OCI-LY7 (cell line): ENCODE measurements at regions of chr2 and their contacts with region 1.

Region 1: GRCh38 chr2:194148776-194149175 is 1508.2 kb upstream of the SLC39A10 start:
- DNase-seq: no peak
- H3K4me3 ChIP-seq: no peak overlapping the region
- H3K27ac ChIP-seq: no peak overlapping the region
- H3K4me1 ChIP-seq: no peaks in the 10 kb centered on the region
- CTCF ChIP-seq: no peak

Region 2: GRCh38 chr2:194135463-194135862 is 13.3 kb before region 1 on chr2:
- CTCF ChIA-PET with region 1: no interaction called
- POLR2A ChIA-PET with region 1: interaction called, 12 read pairs
- intact Hi-C with region 1: no loop called
- DNase-seq: no peak
- H3K4me3 ChIP-seq: no peak overlapping the region
- H3K27ac ChIP-seq: no peak overlapping the region
- H3K4me1 ChIP-seq: no peaks in the 10 kb centered on the region
- CTCF ChIP-seq: no peak